ENCODE measurements at regions of chr12 and their contacts with region 1.

Region 1: DNA sequence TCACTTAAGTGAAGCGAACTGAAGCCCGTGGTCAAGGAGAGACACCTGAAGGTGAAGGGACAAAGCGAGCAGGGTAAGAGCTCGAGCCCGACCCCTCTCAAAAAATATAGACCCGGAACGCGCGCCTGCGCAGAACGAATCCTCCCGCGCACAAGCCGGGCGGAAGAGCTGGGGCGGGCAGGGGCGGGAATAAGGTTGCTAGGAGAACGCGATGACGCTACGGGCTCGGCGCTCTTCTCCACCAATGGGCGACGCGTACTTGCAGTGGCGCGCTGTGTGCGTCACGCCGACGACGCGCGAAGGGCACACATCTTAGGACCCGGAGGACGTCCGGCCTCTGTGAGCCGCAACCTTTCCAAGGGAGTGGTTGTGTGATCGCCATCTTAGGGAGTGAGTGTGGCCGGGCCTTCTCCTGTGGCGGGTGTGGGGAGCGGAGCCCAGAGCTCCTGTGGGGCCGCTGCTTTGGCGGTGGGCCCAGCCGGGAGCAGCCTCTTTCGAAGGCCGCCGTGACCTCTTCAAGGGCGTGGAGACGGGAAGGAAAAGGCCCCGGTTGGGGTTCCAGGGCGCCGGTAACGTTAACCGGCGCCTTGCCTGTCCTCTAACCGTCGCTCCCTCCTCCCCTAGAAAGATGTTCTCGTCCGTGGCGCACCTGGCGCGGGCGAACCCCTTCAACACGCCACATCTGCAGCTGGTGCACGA is at the start of gene SLC25A3:
- DNase-seq: peak; percentile 95
- H3K4me3 Mint-ChIP-seq: peak within 1 kb of the TSS; percentile 86
- H3K27ac Mint-ChIP-seq: peak within 1 kb of the TSS; percentile 97
- H3K4me1 Mint-ChIP-seq: peaks cover 34% of the 10 kb centered on the region
- H3K27me3 Mint-ChIP-seq: no peaks in the 10 kb centered on the region
- total RNA-seq, gene SLC25A3: 355 to 365 TPM

Region 2: DNA sequence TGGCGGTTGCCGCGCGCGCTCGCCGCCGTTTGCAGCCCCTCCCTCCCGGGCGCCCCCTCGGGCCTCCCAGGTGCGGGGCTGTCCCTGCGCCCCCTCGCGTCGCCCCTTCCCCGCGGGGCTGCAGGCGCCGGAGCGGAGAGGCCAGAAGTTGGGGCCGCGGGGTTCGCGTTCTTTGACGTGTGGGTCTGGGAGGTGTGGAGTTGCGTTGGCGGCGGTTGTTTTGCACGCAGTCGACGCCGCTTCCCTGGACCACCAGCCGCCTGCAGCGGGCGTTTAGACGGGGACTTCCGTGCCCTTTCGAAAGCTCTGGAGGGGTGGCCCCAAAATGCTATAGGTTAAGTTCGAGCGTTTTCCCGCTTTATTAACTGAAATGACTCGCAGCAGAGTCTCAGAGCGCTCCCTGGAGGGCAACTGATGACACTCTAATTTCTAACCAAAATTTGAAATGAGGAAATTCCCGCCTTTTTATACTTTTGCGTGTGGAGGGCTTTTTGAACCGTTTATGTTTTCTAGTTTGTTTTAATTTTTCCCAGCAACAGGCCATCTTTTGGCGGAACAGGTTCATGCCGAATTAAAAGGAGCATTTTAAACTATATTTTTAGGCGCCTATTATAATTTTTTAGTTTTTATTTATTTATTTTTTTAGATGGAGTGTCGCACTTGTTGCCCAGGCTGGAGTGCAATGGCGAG is 77.2 kb before region 1 on chr12:
- CTCF ChIA-PET with region 1: interaction called, 9 read pairs
- POLR2A ChIA-PET with region 1: interaction called, 156 read pairs
- DNase-seq: peak; percentile 90
- H3K4me3 Mint-ChIP-seq: peak overlapping the region; percentile 100
- H3K27ac Mint-ChIP-seq: peak overlapping the region; percentile 100
- H3K4me1 Mint-ChIP-seq: peaks cover 29% of the 10 kb centered on the region
- H3K27me3 Mint-ChIP-seq: no peaks in the 10 kb centered on the region

Region 3: DNA sequence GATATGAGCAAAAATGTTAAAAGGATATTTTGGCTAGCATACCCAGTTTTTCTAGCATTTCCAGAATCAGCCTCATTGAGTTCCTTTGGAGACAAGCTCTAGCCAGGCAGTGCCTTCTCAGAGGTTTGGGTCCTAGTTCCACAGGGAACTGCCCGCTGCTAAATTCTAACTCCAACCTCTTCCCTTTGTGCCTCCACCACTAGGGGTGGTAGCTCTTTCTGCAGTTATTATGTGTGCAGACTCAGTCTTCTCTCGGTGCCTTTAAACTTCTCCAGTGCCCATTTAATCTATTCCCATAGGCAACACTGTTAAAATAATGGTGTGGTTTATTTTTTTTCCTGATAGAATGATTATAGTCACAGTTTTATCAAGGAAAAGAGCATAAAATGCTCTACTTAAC is 21.5 kb before region 1 on chr12:
- CTCF ChIA-PET with region 1: interaction called, 48 read pairs
- POLR2A ChIA-PET with region 1: interaction called, 14 read pairs
- DNase-seq: no peak
- H3K4me3 Mint-ChIP-seq: no peak overlapping the region
- H3K27ac Mint-ChIP-seq: no peak overlapping the region
- H3K4me1 Mint-ChIP-seq: no peaks in the 10 kb centered on the region
- H3K27me3 Mint-ChIP-seq: no peaks in the 10 kb centered on the region

Region 4: GRCh38 chr12:98635657-98636323 is 42.3 kb after region 1 on chr12:
- CTCF ChIA-PET with region 1: interaction called, 3 read pairs
- POLR2A ChIA-PET with region 1: interaction called, 142 read pairs
- DNase-seq: no peak
- H3K4me3 Mint-ChIP-seq: no peak overlapping the region
- H3K27ac Mint-ChIP-seq: no peak overlapping the region
- H3K4me1 Mint-ChIP-seq: peaks cover 13% of the 10 kb centered on the region
- H3K27me3 Mint-ChIP-seq: no peaks in the 10 kb centered on the region

Region 5: GRCh38 chr12:98653866-98654493 is 60.5 kb after region 1 on chr12:
- CTCF ChIA-PET with region 1: interaction called, 13 read pairs
- POLR2A ChIA-PET with region 1: interaction called, 6 read pairs
- DNase-seq: no peak
- H3K4me3 Mint-ChIP-seq: no peak overlapping the region
- H3K27ac Mint-ChIP-seq: no peak overlapping the region
- H3K4me1 Mint-ChIP-seq: peaks cover 24% of the 10 kb centered on the region
- H3K27me3 Mint-ChIP-seq: no peaks in the 10 kb centered on the region